Caco-2 (cell line): ENCODE measurements at regions of chr12 and their contacts with region 1.

Region 1: DNA sequence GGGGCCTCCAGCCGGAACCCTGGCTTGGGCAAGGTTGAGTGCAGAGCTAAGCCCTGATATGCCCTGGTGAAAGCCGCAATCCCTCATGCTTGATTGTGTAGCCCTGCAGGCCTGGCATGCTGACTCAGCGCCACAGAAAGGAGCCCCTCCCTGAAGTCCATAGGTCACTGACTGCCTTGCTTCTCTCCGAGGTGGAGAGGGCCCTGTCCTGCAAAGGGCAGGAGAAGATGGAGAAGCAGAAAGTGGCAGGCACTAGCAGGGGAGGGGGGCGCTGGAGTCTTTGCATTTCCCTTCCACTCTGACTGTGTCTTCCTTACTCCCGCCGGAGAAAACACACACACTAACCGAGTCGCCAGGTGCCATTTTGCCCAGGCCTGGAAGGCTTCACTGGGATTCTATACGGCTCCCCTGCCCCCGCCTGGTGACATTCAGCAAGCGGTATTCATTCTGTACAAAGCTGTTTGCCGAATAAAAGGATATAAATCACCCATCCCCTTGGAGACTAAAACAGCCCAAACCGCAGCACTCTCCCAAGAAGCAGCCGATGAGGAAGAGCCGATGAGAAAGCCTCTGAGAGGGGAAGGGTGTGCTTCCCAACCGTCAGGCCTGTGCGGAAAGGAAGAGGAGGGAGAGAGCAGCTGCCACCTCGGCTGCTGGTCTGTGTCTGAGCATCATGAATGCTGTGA is 69.8 kb downstream of the SLC6A12 start:
- DNase-seq: peak; percentile 81 to 89
- H3K4me3 ChIP-seq: no peak overlapping the region
- H3K4me3 Mint-ChIP-seq: peak overlapping the region; percentile 47
- H3K27ac Mint-ChIP-seq: peak overlapping the region; percentile 82
- H3K4me1 ChIP-seq: peaks cover 47% of the 10 kb centered on the region
- H3K4me1 Mint-ChIP-seq: peaks cover 55% of the 10 kb centered on the region
- H3K27me3 ChIP-seq: no peaks in the 10 kb centered on the region
- H3K27me3 Mint-ChIP-seq: no peaks in the 10 kb centered on the region
- CTCF ChIP-seq: no peak

Region 2: GRCh38 chr12:106118-106591 is 38.0 kb before region 1 on chr12:
- CTCF ChIA-PET with region 1: no interaction called
- POLR2A ChIA-PET with region 1: no interaction called
- intact Hi-C with region 1: loop called (anchors 5 kb)
- DNase-seq: peak; percentile 58
- H3K4me3 ChIP-seq: no peak overlapping the region
- H3K4me3 Mint-ChIP-seq: no peak overlapping the region
- H3K27ac Mint-ChIP-seq: no peak overlapping the region
- H3K4me1 ChIP-seq: peaks cover 15% of the 10 kb centered on the region
- H3K4me1 Mint-ChIP-seq: peaks cover 13% of the 10 kb centered on the region
- H3K27me3 ChIP-seq: no peaks in the 10 kb centered on the region
- H3K27me3 Mint-ChIP-seq: peaks cover 4% of the 10 kb centered on the region
- CTCF ChIP-seq: peak in 1 of 2 experiments; percentile 33